Activated CD4-positive, alpha-beta memory T cell treated with anti-CD3 and anti-CD28 coated beads for 36 hours (primary cell): ENCODE measurements at regions of chr11 and their contacts with region 1.

Region 1: GRCh38 chr11:123381817-123382554 is 48.1 kb upstream of the GRAMD1B start:
- DNase-seq: peak; percentile 83
- H3K4me3 Mint-ChIP-seq: no peak overlapping the region
- H3K27ac Mint-ChIP-seq: no peak overlapping the region
- H3K4me1 Mint-ChIP-seq: peaks cover 22% of the 10 kb centered on the region
- H3K27me3 Mint-ChIP-seq: no peaks in the 10 kb centered on the region

Region 2: GRCh38 chr11:123338330-123339005 is 43.5 kb before region 1 on chr11:
- CTCF ChIA-PET with region 1: interaction called, 3 read pairs
- POLR2A ChIA-PET with region 1: interaction called, 3 read pairs
- intact Hi-C with region 1: loop called (anchors 5 kb)
- DNase-seq: no peak
- H3K4me3 Mint-ChIP-seq: no peak overlapping the region
- H3K27ac Mint-ChIP-seq: no peak overlapping the region
- H3K4me1 Mint-ChIP-seq: peaks cover 9% of the 10 kb centered on the region
- H3K27me3 Mint-ChIP-seq: peaks cover 11% of the 10 kb centered on the region

Region 3: GRCh38 chr11:123357961-123358841 is 23.8 kb before region 1 on chr11:
- CTCF ChIA-PET with region 1: interaction called, 54 read pairs
- POLR2A ChIA-PET with region 1: interaction called, 43 read pairs
- intact Hi-C with region 1: loop called (anchors 1 kb)
- DNase-seq: peak; percentile 71
- H3K4me3 Mint-ChIP-seq: peak overlapping the region; percentile 82
- H3K27ac Mint-ChIP-seq: peak overlapping the region; percentile 70
- H3K4me1 Mint-ChIP-seq: peaks cover 36% of the 10 kb centered on the region
- H3K27me3 Mint-ChIP-seq: peaks cover 27% of the 10 kb centered on the region

Region 4: DNA sequence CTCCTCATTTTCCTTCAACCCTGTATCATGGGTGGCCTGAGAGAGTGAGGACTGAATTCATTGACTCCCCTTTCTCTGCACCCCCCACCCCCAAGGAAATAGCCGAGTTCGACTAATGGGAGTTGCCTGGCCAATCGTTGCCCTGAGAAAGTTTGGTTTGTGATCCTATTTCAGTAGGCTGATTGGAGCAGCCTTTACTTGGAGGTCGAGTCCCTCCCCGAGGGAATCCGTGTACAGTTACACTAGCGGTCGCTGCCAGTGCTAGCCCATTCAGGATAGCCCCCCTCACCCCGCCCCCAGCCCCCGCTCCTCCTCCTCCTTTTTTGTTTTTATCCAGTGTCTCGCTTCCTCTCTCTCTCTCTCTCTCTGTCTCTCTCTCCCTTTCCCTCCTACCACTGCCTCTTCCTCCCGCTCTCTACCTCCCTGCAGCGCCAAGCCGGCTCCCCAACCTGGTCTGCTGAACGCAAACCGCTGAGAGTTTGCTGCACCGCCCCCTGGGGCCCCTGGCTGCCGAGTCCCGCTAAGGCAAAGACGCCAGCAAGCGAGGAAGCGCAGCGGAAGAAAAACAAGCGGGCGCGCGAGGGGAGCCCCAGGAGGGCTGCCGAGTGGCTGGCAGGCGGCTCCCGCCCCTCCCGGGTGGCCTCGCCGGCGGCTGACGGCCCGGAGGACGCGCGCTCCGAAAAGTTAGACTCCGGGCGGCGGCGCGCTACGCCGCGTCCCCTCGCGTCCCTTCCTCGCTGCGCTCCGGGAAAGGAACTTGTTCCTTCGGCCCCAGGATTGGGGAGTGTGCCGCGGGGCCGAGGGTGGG is 48.1 kb after region 1 on chr11 and contains the start of gene GRAMD1B:
- CTCF ChIA-PET with region 1: interaction called, 5 read pairs
- POLR2A ChIA-PET with region 1: interaction called, 3 read pairs
- intact Hi-C with region 1: loop called (anchors 1 kb)
- DNase-seq: peak; percentile 85
- H3K4me3 Mint-ChIP-seq: peak within 1 kb of the TSS; percentile 85
- H3K27ac Mint-ChIP-seq: peak within 1 kb of the TSS; percentile 90
- H3K4me1 Mint-ChIP-seq: peaks cover 40% of the 10 kb centered on the region
- H3K27me3 Mint-ChIP-seq: no peaks in the 10 kb centered on the region
- total RNA-seq, gene GRAMD1B: 36.8 to 39.0 TPM

Region 5: DNA sequence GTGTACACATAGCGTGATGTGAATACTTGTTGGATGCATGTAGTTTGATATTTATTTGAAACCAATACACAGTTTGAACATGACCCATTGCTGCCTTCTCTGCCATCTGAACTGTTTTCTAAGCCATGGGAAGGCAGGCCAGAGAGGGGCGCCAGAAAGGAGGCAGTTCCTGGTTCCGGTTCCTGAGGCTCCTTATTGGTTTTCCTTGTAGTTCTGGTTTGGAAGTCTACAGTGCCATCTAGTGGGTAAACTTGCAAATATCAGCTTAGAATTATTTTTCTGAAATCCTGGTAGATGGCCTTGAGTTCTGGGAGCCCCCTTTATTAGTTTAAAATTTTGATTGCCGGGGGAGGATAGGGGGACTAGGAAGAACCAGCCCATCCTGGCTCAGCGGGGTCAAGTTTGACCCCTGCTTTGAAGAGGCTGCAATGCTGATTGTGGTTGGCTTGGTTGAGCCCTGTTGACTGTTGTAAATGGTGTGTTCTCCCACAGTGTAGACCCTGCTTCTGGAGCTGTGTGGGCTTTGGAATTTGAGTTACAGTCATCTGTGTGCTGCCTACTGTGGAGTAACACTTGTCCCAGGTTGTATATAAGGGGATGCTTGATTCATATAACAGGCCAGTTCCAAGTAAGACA is 96.5 kb after region 1 on chr11:
- CTCF ChIA-PET with region 1: interaction called, 10 read pairs
- POLR2A ChIA-PET with region 1: no interaction called
- intact Hi-C with region 1: loop called (anchors 1 kb)
- DNase-seq: peak; percentile 38
- H3K4me3 Mint-ChIP-seq: peak overlapping the region; percentile 27
- H3K27ac Mint-ChIP-seq: peak overlapping the region; percentile 56
- H3K4me1 Mint-ChIP-seq: peaks cover 43% of the 10 kb centered on the region
- H3K27me3 Mint-ChIP-seq: no peaks in the 10 kb centered on the region